ENCODE measurements at regions of chr10 and their contacts with region 1.

Region 1: GRCh38 chr10:112140110-112140970 is 43.2 kb downstream of the GPAM start:
- DNase-seq: peak; percentile 67
- H3K4me3 ChIP-seq: no peak overlapping the region
- H3K27ac ChIP-seq: no peak overlapping the region
- H3K4me1 ChIP-seq: no peaks in the 10 kb centered on the region
- H3K27me3 ChIP-seq: no peaks in the 10 kb centered on the region
- CTCF ChIP-seq: peak; percentile 90 to 91
- POLR2A ChIP-seq: no peak

Region 2: GRCh38 chr10:110225756-110226542 is 1914.4 kb before region 1 on chr10:
- CTCF ChIA-PET with region 1: no interaction called
- POLR2A ChIA-PET with region 1: no interaction called
- dilution Hi-C with region 1: no loop called
- intact Hi-C with region 1: loop called (anchors 5 kb)
- DNase-seq: peak; percentile 89
- H3K4me3 ChIP-seq: peak overlapping the region; percentile 74 to 92 (median 75)
- H3K27ac ChIP-seq: no peak overlapping the region
- H3K4me1 ChIP-seq: peaks cover 8% of the 10 kb centered on the region
- H3K27me3 ChIP-seq: no peaks in the 10 kb centered on the region
- CTCF ChIP-seq: peak; percentile 54 to 79
- POLR2A ChIP-seq: no peak

Region 3: DNA sequence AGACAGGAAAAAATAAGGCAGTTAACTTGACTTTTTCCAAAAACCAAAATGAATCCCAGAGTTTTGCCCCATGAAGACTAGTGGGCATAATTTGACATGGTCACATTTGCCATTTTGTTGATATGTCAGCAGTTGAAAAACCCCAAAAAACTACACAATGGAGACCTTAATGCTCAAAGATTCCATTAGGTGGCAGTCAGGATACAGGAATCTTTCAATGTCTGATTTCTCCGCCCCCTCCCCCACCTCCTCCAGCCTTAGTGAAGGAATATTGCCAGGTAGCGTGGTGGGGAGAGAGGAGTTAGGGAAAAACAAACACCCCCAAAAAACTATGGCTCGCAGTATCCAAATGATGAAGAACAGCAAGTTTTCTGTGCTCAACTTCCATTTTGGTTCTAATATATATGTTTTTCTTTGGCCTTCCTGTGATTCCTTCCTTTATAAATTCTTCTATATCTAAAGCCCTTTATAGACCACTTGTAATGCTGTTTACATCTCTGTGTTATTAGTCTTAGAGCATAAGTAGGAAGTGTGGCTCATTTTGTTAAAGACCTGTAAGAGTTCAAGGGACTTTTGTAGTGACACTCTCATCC is 1828.9 kb before region 1 on chr10:
- CTCF ChIA-PET with region 1: interaction called, 17 read pairs
- POLR2A ChIA-PET with region 1: no interaction called
- dilution Hi-C with region 1: no loop called
- intact Hi-C with region 1: loop called (anchors 5 kb)
- DNase-seq: peak; percentile 65
- H3K4me3 ChIP-seq: peak overlapping the region in 1 of 3 experiments; percentile 33
- H3K27ac ChIP-seq: peak overlapping the region; percentile 72
- H3K4me1 ChIP-seq: peaks cover 47% of the 10 kb centered on the region
- H3K27me3 ChIP-seq: no peaks in the 10 kb centered on the region
- CTCF ChIP-seq: peak; percentile 54 to 55
- POLR2A ChIP-seq: no peak

Region 4: GRCh38 chr10:110893559-110894179 is 1246.7 kb before region 1 on chr10:
- CTCF ChIA-PET with region 1: interaction called, 11 read pairs
- POLR2A ChIA-PET with region 1: no interaction called
- dilution Hi-C with region 1: no loop called
- intact Hi-C with region 1: no loop called
- DNase-seq: peak; percentile 62
- H3K4me3 ChIP-seq: no peak overlapping the region
- H3K27ac ChIP-seq: no peak overlapping the region
- H3K4me1 ChIP-seq: no peaks in the 10 kb centered on the region
- H3K27me3 ChIP-seq: no peaks in the 10 kb centered on the region
- CTCF ChIP-seq: peak; percentile 17 to 29
- POLR2A ChIP-seq: no peak

Region 5: GRCh38 chr10:112115799-112116385 is 24.4 kb before region 1 on chr10:
- CTCF ChIA-PET with region 1: interaction called, 98 read pairs
- POLR2A ChIA-PET with region 1: no interaction called
- dilution Hi-C with region 1: no loop called
- intact Hi-C with region 1: no loop called
- DNase-seq: peak; percentile 27
- H3K4me3 ChIP-seq: no peak overlapping the region
- H3K27ac ChIP-seq: no peak overlapping the region
- H3K4me1 ChIP-seq: no peaks in the 10 kb centered on the region
- H3K27me3 ChIP-seq: no peaks in the 10 kb centered on the region
- CTCF ChIP-seq: peak; percentile 71 to 90
- POLR2A ChIP-seq: no peak

Region 6: GRCh38 chr10:112151524-112152039 is 11.2 kb after region 1 on chr10:
- CTCF ChIA-PET with region 1: interaction called, 23 read pairs
- POLR2A ChIA-PET with region 1: no interaction called
- dilution Hi-C with region 1: no loop called
- intact Hi-C with region 1: no loop called
- DNase-seq: no peak
- H3K4me3 ChIP-seq: no peak overlapping the region
- H3K27ac ChIP-seq: no peak overlapping the region
- H3K4me1 ChIP-seq: no peaks in the 10 kb centered on the region
- H3K27me3 ChIP-seq: no peaks in the 10 kb centered on the region
- CTCF ChIP-seq: no peak
- POLR2A ChIP-seq: no peak

Region 7: GRCh38 chr10:112314822-112315474 is 174.6 kb after region 1 on chr10:
- CTCF ChIA-PET with region 1: interaction called, 19 read pairs
- POLR2A ChIA-PET with region 1: no interaction called
- dilution Hi-C with region 1: no loop called
- intact Hi-C with region 1: loop called (anchors 1 kb)
- DNase-seq: peak; percentile 68
- H3K4me3 ChIP-seq: no peak overlapping the region
- H3K27ac ChIP-seq: no peak overlapping the region
- H3K4me1 ChIP-seq: peaks cover 20% of the 10 kb centered on the region
- H3K27me3 ChIP-seq: no peaks in the 10 kb centered on the region
- CTCF ChIP-seq: peak; percentile 81 to 88
- POLR2A ChIP-seq: no peak

Measured in endothelial cell of umbilical vein (primary cell).